ENCODE measurements at regions of chrX and their contacts with region 1.

Region 1: DNA sequence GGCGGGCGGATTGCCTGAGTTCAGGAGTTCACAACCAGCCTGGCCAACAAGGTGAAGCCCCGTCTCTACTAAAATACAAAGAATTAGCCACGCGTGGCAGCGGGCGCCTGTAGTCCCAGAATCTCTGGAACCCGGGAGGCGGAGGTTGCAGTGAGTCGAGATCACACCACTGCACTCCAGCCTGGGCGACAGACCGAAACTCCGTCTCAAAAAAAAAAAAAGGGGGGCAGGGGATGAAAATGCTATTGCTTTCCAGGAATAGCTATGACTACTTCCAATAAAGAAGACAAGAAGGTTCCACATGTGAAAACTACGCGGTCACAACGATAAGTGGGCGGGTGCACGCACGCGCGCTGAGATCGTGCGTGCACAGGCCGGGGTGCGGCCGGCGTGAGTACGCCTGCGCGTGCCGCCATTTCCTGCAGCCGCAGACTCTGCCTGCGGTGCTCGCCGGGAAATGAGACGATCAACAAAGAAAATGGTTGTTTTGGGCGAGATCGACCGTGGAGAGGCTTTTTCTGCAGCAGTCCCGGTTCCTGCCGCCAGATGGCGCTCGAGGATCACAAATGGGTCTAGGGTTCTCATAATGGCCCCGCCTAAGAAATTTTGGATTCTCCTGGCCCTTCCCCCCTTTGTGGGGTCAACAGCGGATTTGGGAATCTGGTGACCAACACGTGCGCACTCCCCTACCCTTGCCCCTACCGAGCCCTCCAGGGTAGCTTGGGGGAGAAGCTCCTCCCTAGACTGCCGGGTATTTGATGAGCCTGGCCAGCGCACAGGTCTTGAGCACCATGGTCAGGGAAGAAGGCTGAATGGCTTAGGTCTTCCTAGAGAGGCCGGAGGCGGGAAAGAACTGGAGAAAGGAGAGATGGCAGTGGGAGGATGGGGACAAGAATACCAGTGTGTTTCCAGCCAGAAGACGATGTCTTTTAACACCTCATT is 35.1 kb downstream of the PNMA5 start:
- DNase-seq: peak; percentile 83
- H3K4me3 Mint-ChIP-seq: peak overlapping the region; percentile 34
- H3K27ac Mint-ChIP-seq: peak overlapping the region; percentile 89
- H3K4me1 Mint-ChIP-seq: peaks cover 7% of the 10 kb centered on the region
- H3K27me3 Mint-ChIP-seq: no peaks in the 10 kb centered on the region

Region 2: GRCh38 chrX:153032397-153033118 is 73.8 kb after region 1 on chrX:
- intact Hi-C with region 1: loop called (anchors 1 kb)
- DNase-seq: peak; percentile 52
- H3K4me3 Mint-ChIP-seq: peak overlapping the region; percentile 78
- H3K27ac Mint-ChIP-seq: peak overlapping the region; percentile 77
- H3K4me1 Mint-ChIP-seq: no peaks in the 10 kb centered on the region
- H3K27me3 Mint-ChIP-seq: no peaks in the 10 kb centered on the region

Region 3: GRCh38 chrX:153470435-153471363 is 511.9 kb after region 1 on chrX and contains the start of gene HAUS7:
- intact Hi-C with region 1: loop called (anchors 2 kb)
- DNase-seq: peak; percentile 81
- H3K4me3 Mint-ChIP-seq: peak within 1 kb of the TSS; percentile 85
- H3K27ac Mint-ChIP-seq: peak within 1 kb of the TSS; percentile 80
- H3K4me1 Mint-ChIP-seq: no peaks in the 10 kb centered on the region
- H3K27me3 Mint-ChIP-seq: peaks cover 2% of the 10 kb centered on the region
- total RNA-seq, gene HAUS7: 62.7 and 68.2 TPM in 2 replicates

Region 4: GRCh38 chrX:153599192-153600031 is 640.6 kb after region 1 on chrX:
- intact Hi-C with region 1: loop called (anchors 5 kb)
- DNase-seq: peak; percentile 87
- H3K4me3 Mint-ChIP-seq: peak overlapping the region; percentile 89
- H3K27ac Mint-ChIP-seq: peak overlapping the region; percentile 59
- H3K4me1 Mint-ChIP-seq: peaks cover 30% of the 10 kb centered on the region
- H3K27me3 Mint-ChIP-seq: peaks cover 1% of the 10 kb centered on the region

Region 5: GRCh38 chrX:153667956-153668396 is 709.2 kb after region 1 on chrX:
- intact Hi-C with region 1: loop called (anchors 2 kb)
- DNase-seq: peak; percentile 57
- H3K4me3 Mint-ChIP-seq: peak overlapping the region; percentile 79
- H3K27ac Mint-ChIP-seq: no peak overlapping the region
- H3K4me1 Mint-ChIP-seq: peaks cover 7% of the 10 kb centered on the region
- H3K27me3 Mint-ChIP-seq: peaks cover 8% of the 10 kb centered on the region

Measured in activated T-helper 1 cell treated with anti-CD3 and anti-CD28 coated beads, Interleukin-12 subunit alpha, Interleukin-12 subunit beta, Interleukin-2, Interleukin-4 antibody, amounts not matched to agents 30 ng/mL and 10 ng/mL and 1 ng/mL, durations not matched to agents 14 hours and 24 hours and 36 hours (primary cell).